WTC11 (cell line): ENCODE measurements at regions of chr7 and their contacts with region 1.

Region 1: DNA sequence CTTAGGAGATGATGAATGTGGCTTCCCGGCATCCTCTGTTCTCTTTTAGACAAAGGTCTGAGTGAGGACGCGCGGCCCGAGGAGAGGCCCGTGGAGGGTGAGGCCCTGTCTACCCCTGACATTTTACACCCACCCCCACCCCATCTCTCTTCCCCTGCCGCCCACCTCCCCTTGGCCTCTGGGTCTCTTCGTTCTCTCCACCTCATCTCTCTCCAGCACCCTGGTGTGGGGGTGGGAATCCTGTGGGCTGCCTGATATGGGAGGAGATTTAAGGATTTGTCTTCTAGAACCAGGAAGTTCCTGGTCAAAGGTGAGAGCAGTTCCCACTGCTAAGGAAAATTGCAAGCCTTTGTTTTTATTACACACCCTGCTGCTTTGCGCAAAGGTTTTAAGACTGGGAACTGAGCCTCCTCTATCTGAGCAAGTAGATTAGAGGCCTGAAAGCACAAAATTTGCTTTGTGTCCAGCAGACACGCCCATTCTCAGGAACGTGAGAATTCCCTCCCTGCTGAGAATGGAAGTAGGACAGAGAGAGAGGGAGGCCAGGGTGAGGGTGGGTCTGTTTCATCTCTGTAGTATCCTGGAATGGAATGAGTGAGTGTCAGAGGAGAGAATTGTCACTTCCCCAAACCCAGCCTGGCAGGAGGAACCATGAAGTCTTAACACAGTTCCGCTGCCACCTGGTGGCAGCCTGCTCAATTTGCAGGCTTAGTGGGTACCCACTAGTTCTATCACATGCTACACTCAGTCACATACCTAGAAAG is 91.2 kb downstream of the GTF2IRD1 start:
- DNase-seq: peak; percentile 65
- ATAC-seq: peak; percentile 94
- H3K4me3 Mint-ChIP-seq: no peak overlapping the region
- H3K27ac Mint-ChIP-seq: no peak overlapping the region
- H3K4me1 Mint-ChIP-seq: no peaks in the 10 kb centered on the region
- H3K27me3 Mint-ChIP-seq: no peaks in the 10 kb centered on the region
- CTCF ChIP-seq: peak; percentile 73

Region 2: DNA sequence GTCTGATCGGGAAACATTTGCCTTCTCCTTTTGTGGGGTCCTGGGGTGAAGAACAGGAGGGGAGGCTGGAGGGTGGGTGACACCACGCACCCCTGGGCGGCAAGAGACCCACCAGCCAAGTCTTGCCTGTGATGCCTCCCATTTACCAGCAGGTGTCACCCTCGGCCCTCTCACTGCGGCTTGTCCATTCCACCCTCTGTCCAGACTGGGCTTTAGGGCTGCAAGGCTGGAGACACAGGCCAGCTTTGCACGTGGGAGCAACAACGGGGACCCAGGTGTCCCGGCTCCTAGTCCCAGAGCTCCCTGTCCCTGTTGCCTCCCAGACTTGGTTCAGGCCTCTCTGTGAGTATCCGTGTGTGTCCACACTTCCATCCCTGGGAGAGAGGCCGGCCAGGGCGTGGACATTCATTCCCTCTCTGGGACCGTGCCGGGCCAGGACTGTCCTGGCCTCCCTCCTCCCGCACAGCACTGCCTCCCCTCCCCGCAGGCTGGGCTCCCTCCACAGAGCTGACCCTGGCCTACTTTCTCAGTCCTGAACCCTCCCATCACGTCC is 127.4 kb before region 1 on chr7:
- CTCF ChIA-PET with region 1: interaction called, 10 read pairs
- POLR2A ChIA-PET with region 1: no interaction called
- DNase-seq: peak; percentile 80
- ATAC-seq: peak; percentile 97
- H3K4me3 Mint-ChIP-seq: no peak overlapping the region
- H3K27ac Mint-ChIP-seq: no peak overlapping the region
- H3K4me1 Mint-ChIP-seq: no peaks in the 10 kb centered on the region
- H3K27me3 Mint-ChIP-seq: no peaks in the 10 kb centered on the region; the same call in 1 of the 2 replicates
- CTCF ChIP-seq: peak; percentile 96